Posterior vena cava (tissue), 2 donors: ENCODE measurements at regions of chr5 and their contacts with region 1.

Region 1: GRCh38 chr5:96336351-96336985 is 96.6 kb downstream of the PCSK1 start:
- DNase-seq: no peak

Region 2: GRCh38 chr5:95858661-95859326 is 477.7 kb before region 1 on chr5:
- intact Hi-C with region 1: loop called (anchors 5 to 10 kb)
- DNase-seq: peak; percentile 97

Region 3: GRCh38 chr5:95883613-95884325 is 452.7 kb before region 1 on chr5:
- intact Hi-C with region 1: no loop called
- DNase-seq: no peak

Region 4: GRCh38 chr5:95961617-95962474 is 374.6 kb before region 1 on chr5 and contains the start of gene ELL2:
- intact Hi-C with region 1: loop called (anchors 2 kb)
- DNase-seq: peak; percentile 100
- total RNA-seq, gene ELL2: 69.8 to 135 TPM